ENCODE measurements at regions of chr22 and their contacts with region 1.

Region 1: GRCh38 chr22:44329179-44329796 is 16.5 kb upstream of the SHISAL1 start:
- DNase-seq: no peak
- H3K4me3 ChIP-seq: no peak overlapping the region
- H3K27ac ChIP-seq: no peak overlapping the region
- H3K4me1 ChIP-seq: peaks cover 0 to 27% (median 12%) of the 10 kb centered on the region in 4 donors
- H3K27me3 ChIP-seq: peaks cover 0 to 60% of the 10 kb centered on the region in 2 donors
- CTCF ChIP-seq: no peak

Region 2: DNA sequence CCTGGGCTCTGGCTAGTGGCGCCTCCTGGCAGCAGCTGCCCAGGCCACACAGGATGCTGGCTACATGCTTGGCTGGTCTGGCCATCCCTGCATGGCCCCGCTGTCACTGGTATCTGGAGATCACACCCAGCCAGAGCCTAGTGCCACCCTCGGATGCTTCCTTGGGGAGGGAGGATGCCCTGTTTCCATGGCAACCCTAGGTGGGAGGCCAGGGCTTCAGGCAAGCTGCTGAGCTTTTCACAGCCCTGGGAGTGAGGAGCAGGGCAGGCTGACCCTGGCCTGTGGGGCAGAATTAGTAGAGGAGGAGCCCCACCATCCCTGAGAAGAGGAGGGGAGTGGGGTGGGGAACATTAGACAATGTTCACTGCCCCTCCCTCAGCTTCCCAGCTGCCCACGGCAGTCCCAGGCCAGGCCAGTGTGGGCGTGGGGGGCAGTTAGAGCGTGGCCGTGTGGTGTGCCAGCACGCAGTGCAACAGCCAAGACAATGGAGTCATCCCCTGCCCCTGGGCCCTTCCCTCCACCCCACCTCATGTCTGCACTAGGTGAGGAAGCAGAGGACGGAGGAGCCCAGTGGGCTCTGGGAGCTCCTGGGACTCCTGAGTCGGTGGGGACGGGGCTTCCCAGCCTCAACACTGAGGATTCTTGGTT is 254.8 kb before region 1 on chr22:
- intact Hi-C with region 1: loop called (anchors 10 kb)
- DNase-seq: no peak
- H3K4me3 ChIP-seq: no peak overlapping the region
- H3K27ac ChIP-seq: no peak overlapping the region
- H3K4me1 ChIP-seq: no peaks in the 10 kb centered on the region
- H3K27me3 ChIP-seq: peaks cover 0 to 7% of the 10 kb centered on the region in 2 donors
- CTCF ChIP-seq: no peak

Region 3: GRCh38 chr22:44272401-44272771 is 56.9 kb before region 1 on chr22:
- intact Hi-C with region 1: no loop called
- DNase-seq: no peak
- H3K4me3 ChIP-seq: no peak overlapping the region
- H3K27ac ChIP-seq: no peak overlapping the region
- H3K4me1 ChIP-seq: no peaks in the 10 kb centered on the region
- H3K27me3 ChIP-seq: no peaks in the 10 kb centered on the region
- CTCF ChIP-seq: no peak

Region 4: GRCh38 chr22:44311855-44312170 is 17.5 kb before region 1 on chr22:
- intact Hi-C with region 1: no loop called
- DNase-seq: no peak
- H3K4me3 ChIP-seq: no peak overlapping the region
- H3K27ac ChIP-seq: no peak overlapping the region
- H3K4me1 ChIP-seq: peaks cover 0 to 4% (median 0%) of the 10 kb centered on the region in 4 donors
- H3K27me3 ChIP-seq: peaks cover 0 to 4% of the 10 kb centered on the region in 2 donors
- CTCF ChIP-seq: no peak

Measured in tibial artery (tissue), 4 donors.